CD8-positive, alpha-beta memory T cell (primary cell): ENCODE measurements at regions of chr19 and their contacts with region 1.

Region 1: GRCh38 chr19:55385740-55386529 is at the start of gene RPL28:
- DNase-seq: peak; percentile 96 to 99 (median 98)
- H3K4me3 ChIP-seq: peak within 1 kb of the TSS; percentile 99
- H3K4me3 Mint-ChIP-seq: peak within 1 kb of the TSS; percentile 97 to 100 (median 99)
- H3K27ac ChIP-seq: peak within 1 kb of the TSS; percentile 99
- H3K27ac Mint-ChIP-seq: peak within 1 kb of the TSS; percentile 97 to 100 (median 99)
- H3K4me1 ChIP-seq: peaks cover 57% of the 10 kb centered on the region
- H3K4me1 Mint-ChIP-seq: peaks cover 65 to 82% (median 69%) of the 10 kb centered on the region in 3 donors
- H3K27me3 ChIP-seq: no peaks in the 10 kb centered on the region
- H3K27me3 Mint-ChIP-seq: peaks cover 0 to 10% of the 10 kb centered on the region in 2 donors
- total RNA-seq, gene RPL28: 2,376 to 2,381 TPM

Region 2: GRCh38 chr19:55141696-55142095 is 244.2 kb before region 1 on chr19:
- CTCF ChIA-PET with region 1: interaction called, 12 read pairs
- POLR2A ChIA-PET with region 1: no interaction called
- DNase-seq: no peak
- H3K4me3 ChIP-seq: no peak overlapping the region
- H3K4me3 Mint-ChIP-seq: no peak overlapping the region
- H3K27ac ChIP-seq: no peak overlapping the region
- H3K27ac Mint-ChIP-seq: no peak overlapping the region
- H3K4me1 ChIP-seq: no peaks in the 10 kb centered on the region
- H3K4me1 Mint-ChIP-seq: peaks cover 0 to 9% (median 0%) of the 10 kb centered on the region in 3 donors
- H3K27me3 ChIP-seq: peaks cover 27% of the 10 kb centered on the region
- H3K27me3 Mint-ChIP-seq: peaks cover 51 to 53% of the 10 kb centered on the region in 2 donors

Region 3: DNA sequence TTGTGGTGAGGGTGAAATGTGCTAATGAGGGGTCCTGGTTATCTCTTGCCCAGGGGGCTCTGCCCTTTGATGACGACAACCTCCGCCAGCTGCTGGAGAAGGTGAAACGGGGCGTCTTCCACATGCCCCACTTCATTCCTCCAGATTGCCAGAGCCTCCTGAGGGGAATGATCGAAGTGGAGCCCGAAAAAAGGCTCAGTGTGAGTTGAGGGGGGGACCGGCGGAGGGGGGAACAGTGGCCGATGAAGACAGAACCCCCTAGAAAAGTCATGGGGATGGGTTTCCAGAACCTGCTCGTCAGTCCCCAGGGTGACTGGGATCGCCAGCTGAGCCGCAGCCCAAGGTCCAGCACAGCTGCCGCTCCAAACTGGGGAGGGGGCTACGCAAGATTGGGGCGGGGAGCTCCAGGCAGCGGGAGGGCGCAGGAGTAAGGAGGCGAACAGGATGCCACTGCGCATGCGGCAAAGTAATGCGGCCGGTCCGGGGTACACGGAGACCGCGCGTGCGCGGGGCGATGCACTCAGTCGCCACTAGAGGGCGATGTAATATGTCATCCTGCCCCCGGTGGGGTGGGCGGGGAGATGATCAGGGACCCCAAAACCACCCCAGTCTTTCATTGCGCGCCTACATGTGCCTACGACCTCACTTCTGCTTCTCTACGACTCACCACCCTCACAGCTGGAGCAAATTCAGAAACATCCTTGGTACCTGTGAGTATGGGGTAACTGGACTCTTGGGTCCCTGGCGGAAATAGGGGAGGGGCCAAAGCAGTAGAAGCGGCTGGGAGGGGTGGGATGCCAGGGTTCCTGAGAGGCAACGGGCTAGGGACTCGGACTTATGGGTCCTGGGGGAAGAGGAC is 84.2 kb before region 1 on chr19:
- CTCF ChIA-PET with region 1: interaction called, 22 read pairs
- POLR2A ChIA-PET with region 1: interaction called, 5 read pairs
- DNase-seq: peak; percentile 88 to 95 (median 94)
- H3K4me3 ChIP-seq: peak overlapping the region; percentile 60
- H3K4me3 Mint-ChIP-seq: peak overlapping the region; percentile 50 to 92 (median 86)
- H3K27ac ChIP-seq: peak overlapping the region; percentile 35
- H3K27ac Mint-ChIP-seq: peak overlapping the region; percentile 80 to 98 (median 92)
- H3K4me1 ChIP-seq: peaks cover 14% of the 10 kb centered on the region
- H3K4me1 Mint-ChIP-seq: peaks cover 13 to 19% (median 14%) of the 10 kb centered on the region in 3 donors
- H3K27me3 ChIP-seq: no peaks in the 10 kb centered on the region
- H3K27me3 Mint-ChIP-seq: peaks cover 0 to 2% of the 10 kb centered on the region in 2 donors

Region 4: DNA sequence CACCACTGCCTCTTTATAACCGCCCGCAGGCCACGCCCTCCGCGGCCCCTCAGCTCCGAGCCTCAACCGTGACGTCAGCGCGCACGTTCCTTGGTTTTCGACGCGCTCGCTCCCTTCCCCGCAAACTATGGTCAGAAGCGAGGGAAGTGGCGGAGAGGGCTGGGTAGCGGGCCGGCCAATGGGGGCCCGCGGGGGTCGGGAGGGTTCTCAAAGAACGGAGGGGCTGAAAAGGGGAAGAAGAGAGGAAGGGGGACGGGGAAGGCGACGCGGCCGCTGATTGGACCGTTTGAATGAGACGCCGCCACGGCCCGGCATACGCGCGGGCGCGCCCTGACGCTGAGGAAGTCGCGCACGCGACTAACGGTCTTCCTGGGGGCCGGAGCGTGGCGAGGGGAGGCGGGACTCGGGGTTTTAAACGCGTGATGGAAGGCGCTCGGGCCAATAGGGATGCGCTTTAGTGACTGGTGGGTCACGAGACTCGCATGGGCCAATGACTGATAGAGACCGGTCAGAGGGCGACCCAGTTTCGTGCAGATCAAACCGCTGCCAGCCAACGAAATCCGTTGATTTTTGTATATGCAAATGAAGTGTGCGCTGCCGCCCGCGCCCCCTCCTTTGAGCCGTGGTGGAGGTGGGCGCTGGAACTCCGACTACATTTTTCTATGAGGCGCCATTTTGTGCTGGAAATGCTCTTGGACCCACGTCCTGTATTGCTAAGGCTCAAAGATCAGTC is 22.0 kb after region 1 on chr19:
- CTCF ChIA-PET with region 1: interaction called, 3 read pairs
- POLR2A ChIA-PET with region 1: interaction called, 20 read pairs
- DNase-seq: peak; percentile 96 to 98 (median 98)
- H3K4me3 ChIP-seq: peak overlapping the region; percentile 79
- H3K4me3 Mint-ChIP-seq: peak overlapping the region; percentile 89 to 96 (median 94)
- H3K27ac ChIP-seq: peak overlapping the region; percentile 99
- H3K27ac Mint-ChIP-seq: peak overlapping the region; percentile 98 to 100 (median 99)
- H3K4me1 ChIP-seq: peaks cover 22% of the 10 kb centered on the region
- H3K4me1 Mint-ChIP-seq: peaks cover 29 to 41% (median 38%) of the 10 kb centered on the region in 3 donors
- H3K27me3 ChIP-seq: no peaks in the 10 kb centered on the region
- H3K27me3 Mint-ChIP-seq: peaks cover 0 to 2% of the 10 kb centered on the region in 2 donors